ENCODE measurements at regions of chrX and their contacts with region 1.

Region 1: GRCh38 chrX:76279000-76279399 is 106.1 kb downstream of the PBDC1 start:
- DNase-seq: peak; percentile 43
- H3K4me3 Mint-ChIP-seq: no peak overlapping the region
- H3K27ac Mint-ChIP-seq: no peak overlapping the region
- H3K4me1 Mint-ChIP-seq: no peaks in the 10 kb centered on the region
- H3K27me3 Mint-ChIP-seq: no peaks in the 10 kb centered on the region

Region 2: DNA sequence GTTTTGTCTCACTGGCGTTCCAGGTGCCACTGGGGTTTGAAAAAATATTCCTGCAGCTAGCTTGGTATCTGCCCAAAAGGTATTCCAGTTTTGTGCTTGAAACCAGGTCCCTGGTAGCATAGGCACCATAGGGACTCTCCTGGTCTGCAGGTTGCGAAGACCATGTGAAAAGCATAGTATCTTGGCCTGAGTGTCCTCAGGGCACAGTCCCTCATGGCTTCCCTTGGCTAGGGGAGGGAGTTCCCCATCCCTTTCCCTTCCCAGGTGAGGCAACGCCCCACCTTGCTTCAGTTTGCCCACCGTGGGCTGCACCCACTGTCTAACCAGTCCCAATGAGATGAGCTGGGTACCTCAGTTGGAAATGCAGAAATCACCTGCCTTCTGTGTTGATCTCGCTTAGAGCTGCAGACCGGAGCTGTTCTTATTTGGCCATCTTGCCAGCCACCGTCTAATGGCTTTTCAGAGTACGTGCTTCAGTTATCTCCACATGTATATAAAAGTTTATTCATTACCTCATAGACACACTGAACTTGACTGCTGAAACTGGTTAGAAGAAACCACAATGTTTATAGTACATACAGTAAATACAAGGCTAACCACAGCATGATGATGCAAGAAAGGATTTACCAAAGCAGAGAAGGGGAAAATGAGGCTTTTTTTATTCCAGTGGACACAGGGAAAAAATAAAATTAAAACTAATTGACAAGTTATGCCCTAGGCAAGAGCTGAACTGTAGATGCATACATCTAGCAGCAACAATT is 95.5 kb before region 1 on chrX:
- CTCF ChIA-PET with region 1: no interaction called
- POLR2A ChIA-PET with region 1: no interaction called
- intact Hi-C with region 1: no loop called
- DNase-seq: no peak
- H3K4me3 Mint-ChIP-seq: no peak overlapping the region
- H3K27ac Mint-ChIP-seq: no peak overlapping the region
- H3K4me1 Mint-ChIP-seq: peaks cover 33% of the 10 kb centered on the region
- H3K27me3 Mint-ChIP-seq: no peaks in the 10 kb centered on the region

Region 3: GRCh38 chrX:76454456-76454927 is 175.5 kb after region 1 on chrX:
- CTCF ChIA-PET with region 1: interaction called, 56 read pairs
- POLR2A ChIA-PET with region 1: no interaction called
- intact Hi-C with region 1: loop called (anchors 1 kb)
- DNase-seq: no peak
- H3K4me3 Mint-ChIP-seq: no peak overlapping the region
- H3K27ac Mint-ChIP-seq: no peak overlapping the region
- H3K4me1 Mint-ChIP-seq: no peaks in the 10 kb centered on the region
- H3K27me3 Mint-ChIP-seq: no peaks in the 10 kb centered on the region

Measured in activated CD4-positive, alpha-beta memory T cell treated with anti-CD3 and anti-CD28 coated beads for 36 hours (primary cell).